Breast epithelium (tissue), 4 donors: ENCODE measurements at regions of chr14 and their contacts with region 1.

Region 1: DNA sequence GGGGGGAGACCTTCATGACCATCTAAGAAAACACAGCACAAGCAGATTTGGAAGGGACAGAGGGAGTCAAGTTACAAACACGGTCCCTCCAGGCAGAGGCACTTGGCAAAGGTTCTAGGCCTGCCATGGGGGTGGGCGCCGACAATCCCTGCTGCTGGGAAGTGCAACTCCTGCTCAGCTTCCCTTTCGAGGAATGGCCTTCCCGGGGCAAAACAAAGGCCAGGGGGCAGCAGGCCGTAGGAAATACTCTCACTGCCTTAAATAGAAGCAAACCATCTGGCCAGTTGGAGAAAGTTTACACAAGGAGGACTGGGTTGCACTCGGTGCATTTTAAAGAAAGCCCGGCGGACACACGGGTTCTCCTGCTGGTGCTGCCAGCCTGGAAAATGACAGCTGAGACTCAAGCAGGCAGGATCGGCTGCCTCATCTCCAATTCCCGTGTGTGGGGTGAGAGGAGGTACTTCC is 65.8 kb downstream of the ITPK1 start:
- DNase-seq: no peak
- H3K4me3 ChIP-seq: no peak overlapping the region
- H3K27ac ChIP-seq: no peak overlapping the region
- H3K4me1 ChIP-seq: peaks cover 0 to 4% of the 10 kb centered on the region in 2 donors
- H3K27me3 ChIP-seq: no peaks in the 10 kb centered on the region
- CTCF ChIP-seq: no peak
- POLR2A ChIP-seq: no peak

Region 2: GRCh38 chr14:92990456-92991430 is 59.2 kb before region 1 on chr14:
- intact Hi-C with region 1: no loop called
- DNase-seq: no peak
- H3K4me3 ChIP-seq: no peak overlapping the region
- H3K27ac ChIP-seq: no peak overlapping the region
- H3K4me1 ChIP-seq: peaks cover 7 to 8% of the 10 kb centered on the region in 2 donors
- H3K27me3 ChIP-seq: no peaks in the 10 kb centered on the region
- CTCF ChIP-seq: no peak
- POLR2A ChIP-seq: no peak

Region 3: DNA sequence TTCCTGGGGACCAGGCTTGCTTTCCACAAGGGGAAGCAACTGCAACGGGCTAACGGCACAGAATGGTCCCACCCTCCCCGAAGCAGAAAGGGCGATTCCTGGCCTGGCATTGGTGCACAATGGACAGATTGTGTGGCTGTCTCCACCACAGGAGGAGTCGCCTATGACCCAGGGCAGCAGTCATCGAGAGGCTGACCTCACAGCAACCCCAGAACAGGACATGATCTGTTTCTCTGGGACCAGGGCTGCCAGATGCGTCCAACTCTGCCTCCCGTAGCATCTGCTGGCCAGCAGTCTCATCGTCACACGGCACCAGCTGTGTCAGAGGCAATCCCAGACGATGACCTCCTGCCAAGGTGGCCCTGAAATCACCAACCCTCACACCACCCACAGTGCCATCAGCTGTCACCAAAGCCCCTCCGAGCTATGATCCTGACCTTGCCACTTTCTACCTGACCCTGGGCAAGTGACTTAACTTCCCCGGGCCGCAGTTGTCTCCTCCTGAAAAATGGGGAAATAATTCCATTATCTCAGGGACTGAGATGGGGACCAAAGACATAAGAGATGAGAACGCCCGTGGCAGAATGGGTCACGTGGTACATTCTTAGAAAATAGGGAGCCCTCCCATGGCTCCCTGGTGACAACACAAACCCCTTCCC is 40.3 kb before region 1 on chr14:
- intact Hi-C with region 1: loop called (anchors 2 kb)
- DNase-seq: no peak
- H3K4me3 ChIP-seq: no peak overlapping the region
- H3K27ac ChIP-seq: peak overlapping the region in 1 of 2 donors; percentile 32
- H3K4me1 ChIP-seq: peaks cover 12 to 13% of the 10 kb centered on the region in 2 donors
- H3K27me3 ChIP-seq: no peaks in the 10 kb centered on the region
- CTCF ChIP-seq: no peak
- POLR2A ChIP-seq: no peak